ENCODE measurements at regions of chr12 and their contacts with region 1.

Region 1: DNA sequence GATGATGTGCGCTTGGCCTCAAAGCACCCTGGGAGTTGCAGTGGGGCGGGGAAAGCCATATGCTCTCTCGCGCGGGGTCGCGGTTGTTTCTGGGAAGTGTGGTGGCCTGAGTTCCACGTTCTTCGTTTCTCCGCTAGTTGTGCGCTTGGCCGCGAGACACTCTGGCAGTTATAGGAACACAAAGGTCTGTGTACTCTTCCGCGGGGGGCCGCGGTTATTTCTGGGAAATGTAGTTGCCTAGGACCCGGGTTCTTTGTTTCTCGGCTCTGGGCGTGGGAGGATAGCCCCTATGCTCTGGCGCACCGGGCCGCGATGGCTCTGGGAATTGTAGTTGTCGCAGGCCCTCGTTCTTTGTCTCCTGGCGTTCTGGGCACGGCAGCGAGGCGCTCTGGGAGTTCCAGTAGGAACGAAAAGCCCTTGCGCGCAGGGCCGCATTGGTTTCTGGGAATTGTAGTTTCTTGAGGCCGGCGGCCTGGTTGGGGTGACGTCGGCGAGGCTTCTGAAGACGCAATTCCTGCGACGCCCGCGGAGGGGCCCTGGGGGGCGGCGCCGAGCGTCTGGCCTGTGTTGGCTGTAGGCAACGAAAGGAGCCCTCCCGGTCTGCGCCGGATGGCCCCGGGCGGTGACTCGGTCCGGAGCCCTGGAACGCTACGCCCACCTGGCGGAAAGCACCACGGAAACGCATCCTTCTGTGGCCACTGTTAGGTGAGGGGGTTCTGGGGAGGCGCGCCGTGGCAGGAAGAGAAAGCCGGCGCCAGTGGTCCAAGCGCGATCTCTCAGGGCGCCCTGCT is at the start of gene ZNF140:
- DNase-seq: peak; percentile 95 to 97
- ATAC-seq: peak; percentile 63 to 84 (median 65)
- H3K4me3 ChIP-seq: peak within 1 kb of the TSS; percentile 62
- H3K4me3 Mint-ChIP-seq: no peak within 1 kb of the TSS
- H3K27ac ChIP-seq: peak within 1 kb of the TSS; percentile 88
- H3K27ac Mint-ChIP-seq: no peak within 1 kb of the TSS
- H3K4me1 ChIP-seq: peaks cover 16% of the 10 kb centered on the region
- H3K4me1 Mint-ChIP-seq: peaks cover 4 to 7% of the 10 kb centered on the region in 2 donors
- H3K27me3 ChIP-seq: no peaks in the 10 kb centered on the region
- H3K27me3 Mint-ChIP-seq: peaks cover 0 to 2% of the 10 kb centered on the region in 2 donors
- CTCF ChIP-seq: no peak
- total RNA-seq, gene ZNF140: 8.8 to 15.4 (median 9.9) TPM

Region 2: GRCh38 chr12:132478845-132479244 is 601.7 kb before region 1 on chr12:
- intact Hi-C with region 1: no loop called
- DNase-seq: no peak
- ATAC-seq: no peak
- H3K4me3 ChIP-seq: no peak overlapping the region
- H3K4me3 Mint-ChIP-seq: no peak overlapping the region
- H3K27ac ChIP-seq: no peak overlapping the region
- H3K27ac Mint-ChIP-seq: no peak overlapping the region
- H3K4me1 ChIP-seq: peaks cover 58% of the 10 kb centered on the region
- H3K4me1 Mint-ChIP-seq: peaks cover 11 to 32% of the 10 kb centered on the region in 2 donors
- H3K27me3 ChIP-seq: no peaks in the 10 kb centered on the region
- H3K27me3 Mint-ChIP-seq: peaks cover 0 to 14% of the 10 kb centered on the region in 2 donors
- CTCF ChIP-seq: no peak

Region 3: GRCh38 chr12:132887513-132888351 is 192.8 kb before region 1 on chr12 and contains the start of gene CHFR:
- intact Hi-C with region 1: loop called (anchors 1 kb)
- DNase-seq: peak; percentile 92 to 97
- ATAC-seq: peak; percentile 97 to 100 (median 97)
- H3K4me3 ChIP-seq: peak within 1 kb of the TSS; percentile 91
- H3K4me3 Mint-ChIP-seq: peak within 1 kb of the TSS; percentile 98
- H3K27ac ChIP-seq: peak within 1 kb of the TSS; percentile 99
- H3K27ac Mint-ChIP-seq: peak within 1 kb of the TSS; percentile 100
- H3K4me1 ChIP-seq: peaks cover 12% of the 10 kb centered on the region
- H3K4me1 Mint-ChIP-seq: peaks cover 16 to 22% of the 10 kb centered on the region in 2 donors
- H3K27me3 ChIP-seq: no peaks in the 10 kb centered on the region
- H3K27me3 Mint-ChIP-seq: peaks cover 8 to 10% of the 10 kb centered on the region in 2 donors
- CTCF ChIP-seq: no peak
- total RNA-seq, gene CHFR: 161 to 170 (median 168) TPM

Region 4: DNA sequence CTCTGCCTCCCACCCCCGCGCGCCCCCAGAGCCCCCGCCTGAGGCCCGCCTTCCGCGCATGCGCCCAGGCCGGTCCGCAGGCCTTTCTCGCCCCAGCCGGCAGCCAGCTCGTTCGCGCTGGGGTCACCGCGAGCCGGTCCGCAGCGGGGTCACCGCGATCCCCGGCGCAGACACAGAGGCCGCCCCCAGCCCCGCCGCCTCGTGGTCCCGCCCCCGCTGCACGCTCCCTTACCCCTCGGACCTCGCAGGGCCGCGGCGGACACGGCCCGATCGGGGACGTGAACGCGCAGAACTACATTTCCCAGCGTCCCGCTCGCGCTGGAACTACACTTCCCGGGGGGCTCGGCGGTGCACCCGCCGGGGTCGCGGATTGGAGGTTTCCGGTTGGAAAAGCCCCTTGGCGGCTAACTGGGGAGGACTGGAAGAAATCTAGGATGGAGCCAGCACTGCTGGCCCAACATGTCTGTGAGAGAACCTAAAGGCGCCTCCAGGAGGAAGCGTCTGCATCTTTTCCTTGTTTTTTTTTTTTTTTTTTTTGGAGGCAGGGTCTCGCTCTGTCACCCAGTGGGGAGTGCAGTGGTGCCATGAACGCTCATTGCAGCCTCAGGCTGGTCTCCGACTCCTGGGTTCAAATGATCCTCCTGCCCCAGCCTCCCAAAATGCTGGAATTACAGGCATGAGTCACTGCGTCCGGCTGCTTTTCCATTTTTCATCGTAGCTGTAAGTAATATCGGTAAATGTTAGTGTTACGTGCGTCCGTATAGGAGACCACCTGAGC is 124.4 kb before region 1 on chr12 and contains the start of gene ZNF605:
- intact Hi-C with region 1: loop called (anchors 1 kb)
- DNase-seq: peak; percentile 85 to 94
- ATAC-seq: peak; percentile 94 to 97 (median 95)
- H3K4me3 ChIP-seq: peak within 1 kb of the TSS; percentile 92
- H3K4me3 Mint-ChIP-seq: peak within 1 kb of the TSS; percentile 90
- H3K27ac ChIP-seq: peak within 1 kb of the TSS; percentile 77
- H3K27ac Mint-ChIP-seq: peak within 1 kb of the TSS; percentile 87 to 94
- H3K4me1 ChIP-seq: peaks cover 27% of the 10 kb centered on the region
- H3K4me1 Mint-ChIP-seq: peaks cover 15 to 39% of the 10 kb centered on the region in 2 donors
- H3K27me3 ChIP-seq: no peaks in the 10 kb centered on the region
- H3K27me3 Mint-ChIP-seq: no peaks in the 10 kb centered on the region
- CTCF ChIP-seq: no peak
- total RNA-seq, gene ZNF605: 6.0 to 15.8 (median 7.6) TPM

Region 5: GRCh38 chr12:133037207-133038005 is 43.2 kb before region 1 on chr12 and contains the start of gene ZNF84:
- intact Hi-C with region 1: loop called (anchors 1 kb)
- DNase-seq: peak; percentile 93 to 99
- ATAC-seq: peak; percentile 86 to 97 (median 87)
- H3K4me3 ChIP-seq: peak within 1 kb of the TSS; percentile 71
- H3K4me3 Mint-ChIP-seq: peak within 1 kb of the TSS; percentile 98
- H3K27ac ChIP-seq: peak within 1 kb of the TSS; percentile 97
- H3K27ac Mint-ChIP-seq: peak within 1 kb of the TSS; percentile 94 to 96
- H3K4me1 ChIP-seq: peaks cover 4% of the 10 kb centered on the region
- H3K4me1 Mint-ChIP-seq: peaks cover 5 to 15% of the 10 kb centered on the region in 2 donors
- H3K27me3 ChIP-seq: no peaks in the 10 kb centered on the region
- H3K27me3 Mint-ChIP-seq: peaks cover 0 to 10% of the 10 kb centered on the region in 2 donors
- CTCF ChIP-seq: no peak
- total RNA-seq, gene ZNF84: 23.4 to 31.1 (median 26.1) TPM

Region 6: DNA sequence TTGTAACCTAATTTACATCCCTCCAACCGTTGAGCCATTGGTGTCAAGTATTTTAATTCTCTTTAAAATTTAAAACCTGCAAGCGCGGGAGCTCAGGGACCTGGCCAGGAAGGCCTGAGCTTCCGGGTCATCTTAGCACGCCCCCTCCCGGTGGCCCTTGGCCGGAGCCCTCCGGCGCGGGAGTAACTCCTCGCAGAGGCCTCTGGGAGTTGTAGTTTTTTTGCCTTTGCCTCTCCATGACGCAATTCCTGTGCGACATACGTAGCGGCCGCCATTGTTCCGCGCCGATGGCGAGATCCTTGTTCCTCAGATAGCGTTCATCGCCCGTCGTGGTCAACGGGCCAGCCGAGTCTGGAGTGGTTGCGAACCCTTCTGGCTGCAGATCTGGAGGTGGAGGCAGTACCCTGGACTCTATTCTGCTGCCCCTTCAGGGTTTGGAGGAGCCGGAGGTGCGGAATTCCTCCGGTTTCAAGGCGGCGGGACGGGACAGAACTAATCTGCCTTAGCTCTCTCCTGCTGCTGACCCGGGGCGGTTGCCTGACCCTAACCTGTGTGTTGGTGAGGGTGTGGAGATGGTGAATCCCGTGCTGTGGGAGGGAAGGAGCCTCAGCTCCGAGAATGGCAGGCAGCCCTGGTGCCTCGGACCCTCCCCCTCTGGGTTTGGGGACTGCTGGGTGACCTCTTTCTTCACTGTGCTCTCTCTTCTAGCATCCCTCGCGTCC is 100.8 kb after region 1 on chr12 and contains the start of gene ZNF268:
- intact Hi-C with region 1: loop called (anchors 1 kb)
- DNase-seq: peak; percentile 90 to 93
- ATAC-seq: peak; percentile 96
- H3K4me3 ChIP-seq: peak within 1 kb of the TSS; percentile 71
- H3K4me3 Mint-ChIP-seq: peak within 1 kb of the TSS; percentile 96
- H3K27ac ChIP-seq: peak within 1 kb of the TSS; percentile 75
- H3K27ac Mint-ChIP-seq: peak within 1 kb of the TSS; percentile 92 to 96
- H3K4me1 ChIP-seq: peaks cover 9% of the 10 kb centered on the region
- H3K4me1 Mint-ChIP-seq: peaks cover 27 to 38% of the 10 kb centered on the region in 2 donors
- H3K27me3 ChIP-seq: no peaks in the 10 kb centered on the region
- H3K27me3 Mint-ChIP-seq: peaks cover 5 to 8% of the 10 kb centered on the region in 2 donors
- CTCF ChIP-seq: peak; percentile 72
- total RNA-seq, gene ZNF268: 12.7 to 17.5 (median 14.3) TPM